AG04449 (cell line): ENCODE measurements at regions of chr16 and their contacts with region 1.

Region 1: GRCh38 chr16:8660841-8661301 is 13.5 kb upstream of the ABAT start:
- DNase-seq: peak; percentile 9
- H3K4me3 ChIP-seq: peak overlapping the region; percentile 20; the same call in 1 of the 2 replicates
- CTCF ChIP-seq: peak; percentile 88

Region 2: DNA sequence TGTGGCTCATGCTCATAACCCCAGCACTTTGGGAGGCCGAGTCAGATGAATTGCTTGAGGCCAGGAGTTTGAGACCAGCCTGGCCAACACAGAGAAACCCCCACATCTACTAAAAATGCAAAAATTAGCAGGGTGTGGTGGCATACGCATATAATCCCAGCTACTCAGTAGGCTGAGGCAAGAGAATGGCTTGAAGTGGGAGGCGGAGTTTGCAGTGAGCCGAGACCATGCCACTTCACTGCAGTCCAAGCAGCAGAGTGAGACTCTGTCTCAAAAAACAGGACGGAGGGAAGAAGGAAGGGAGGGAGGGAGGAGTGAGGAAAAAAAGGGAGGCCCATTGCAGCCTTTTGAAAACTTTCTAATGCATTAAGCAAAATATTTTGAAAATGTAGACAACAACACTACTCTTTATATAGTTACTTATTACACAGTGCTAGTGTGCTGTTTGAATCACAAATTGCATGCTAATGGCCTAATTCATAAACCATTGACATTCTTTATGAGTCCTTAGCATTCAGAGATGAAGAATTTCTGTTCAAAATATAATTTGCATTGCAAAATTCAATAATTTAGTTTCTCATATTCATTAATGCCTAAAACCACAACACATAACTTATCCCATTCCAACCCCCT is 130.0 kb before region 1 on chr16:
- CTCF ChIA-PET with region 1: no interaction called
- POLR2A ChIA-PET with region 1: no interaction called
- DNase-seq: no peak
- H3K4me3 ChIP-seq: no peak overlapping the region
- CTCF ChIP-seq: no peak

Region 3: GRCh38 chr16:8649829-8650554 is 10.9 kb before region 1 on chr16:
- CTCF ChIA-PET with region 1: interaction called, 25 read pairs
- POLR2A ChIA-PET with region 1: no interaction called
- DNase-seq: no peak
- H3K4me3 ChIP-seq: no peak overlapping the region
- CTCF ChIP-seq: no peak

Region 4: DNA sequence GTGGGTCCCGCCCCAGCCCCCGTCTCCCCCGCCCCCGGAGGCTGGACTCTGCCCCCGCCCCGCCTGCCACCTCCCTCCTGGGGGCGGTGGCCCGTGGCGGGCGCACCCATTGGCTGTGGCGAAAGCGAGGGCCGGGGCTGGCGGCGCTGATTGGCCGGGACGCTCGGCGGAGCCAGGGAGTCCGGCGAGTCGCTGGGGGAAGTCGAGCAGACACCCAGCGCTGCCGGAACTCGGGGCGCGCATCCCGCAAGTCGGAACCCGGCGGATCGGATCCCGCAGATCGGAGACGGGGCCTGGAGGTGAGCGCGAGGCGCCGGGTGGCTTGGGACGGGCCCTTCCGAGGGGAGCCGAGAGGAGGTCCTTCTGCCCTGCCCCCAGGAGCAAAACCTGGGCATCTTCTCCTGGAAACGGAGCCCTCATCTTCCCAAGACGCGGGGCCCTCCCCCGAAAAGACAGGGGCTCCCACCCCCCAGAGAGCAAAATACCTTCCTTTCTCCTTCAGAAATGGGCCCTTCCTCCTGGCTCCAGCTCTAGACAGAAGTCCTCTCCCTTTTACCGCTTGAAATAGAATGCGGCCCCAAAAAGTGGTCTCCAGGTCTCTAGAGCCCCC is 13.6 kb after region 1 on chr16 and contains the start of gene ABAT:
- CTCF ChIA-PET with region 1: interaction called, 49 read pairs
- POLR2A ChIA-PET with region 1: no interaction called
- DNase-seq: peak; percentile 5
- H3K4me3 ChIP-seq: peak within 1 kb of the TSS; percentile 77
- CTCF ChIP-seq: no peak

Region 5: DNA sequence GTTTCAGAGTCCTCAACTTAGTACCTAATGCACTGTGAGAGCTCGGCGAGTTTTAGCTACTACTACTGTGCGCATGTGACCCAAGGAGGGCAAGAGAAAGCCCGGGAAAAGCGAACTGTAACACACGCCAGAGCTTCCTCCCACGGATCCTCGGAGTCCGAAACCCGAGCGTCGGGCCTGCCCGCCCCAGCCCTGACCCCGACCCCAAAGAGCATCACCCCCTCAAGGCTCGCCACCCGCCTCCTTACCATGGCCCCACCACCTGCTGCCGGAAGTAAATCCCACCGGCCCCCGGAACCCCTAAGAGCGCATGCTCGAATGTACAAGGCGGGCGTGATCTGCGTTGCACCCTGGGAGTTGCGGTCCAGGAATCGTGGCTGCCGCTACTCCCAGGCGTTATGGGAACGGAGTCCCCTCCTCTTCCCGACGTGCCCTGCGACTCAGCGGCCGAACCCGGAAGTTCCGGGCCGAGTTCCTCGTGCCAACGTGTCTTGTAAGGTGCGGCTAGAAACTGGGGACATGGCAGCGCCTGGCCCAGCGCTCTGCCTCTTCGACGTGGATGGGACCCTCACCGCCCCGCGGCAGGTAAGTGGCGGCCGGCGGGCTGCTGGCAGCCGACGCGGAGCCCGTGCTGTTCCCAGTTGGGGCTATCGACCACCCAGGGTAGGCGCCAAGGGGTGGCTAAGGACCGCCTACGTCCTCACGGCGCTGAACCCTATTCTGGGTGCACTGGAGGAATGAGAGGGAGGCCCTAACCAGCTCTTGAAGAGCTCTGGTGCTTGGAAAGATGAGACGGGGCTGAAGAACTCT is 136.7 kb after region 1 on chr16 and contains the starts of genes PMM2 and TMEM186:
- CTCF ChIA-PET with region 1: interaction called, 342 read pairs
- POLR2A ChIA-PET with region 1: no interaction called
- DNase-seq: peak; percentile 73
- H3K4me3 ChIP-seq: peak within 1 kb of the TSS; percentile 98
- CTCF ChIP-seq: no peak